ENCODE measurements at regions of chr17 and their contacts with region 1.

Region 1: DNA sequence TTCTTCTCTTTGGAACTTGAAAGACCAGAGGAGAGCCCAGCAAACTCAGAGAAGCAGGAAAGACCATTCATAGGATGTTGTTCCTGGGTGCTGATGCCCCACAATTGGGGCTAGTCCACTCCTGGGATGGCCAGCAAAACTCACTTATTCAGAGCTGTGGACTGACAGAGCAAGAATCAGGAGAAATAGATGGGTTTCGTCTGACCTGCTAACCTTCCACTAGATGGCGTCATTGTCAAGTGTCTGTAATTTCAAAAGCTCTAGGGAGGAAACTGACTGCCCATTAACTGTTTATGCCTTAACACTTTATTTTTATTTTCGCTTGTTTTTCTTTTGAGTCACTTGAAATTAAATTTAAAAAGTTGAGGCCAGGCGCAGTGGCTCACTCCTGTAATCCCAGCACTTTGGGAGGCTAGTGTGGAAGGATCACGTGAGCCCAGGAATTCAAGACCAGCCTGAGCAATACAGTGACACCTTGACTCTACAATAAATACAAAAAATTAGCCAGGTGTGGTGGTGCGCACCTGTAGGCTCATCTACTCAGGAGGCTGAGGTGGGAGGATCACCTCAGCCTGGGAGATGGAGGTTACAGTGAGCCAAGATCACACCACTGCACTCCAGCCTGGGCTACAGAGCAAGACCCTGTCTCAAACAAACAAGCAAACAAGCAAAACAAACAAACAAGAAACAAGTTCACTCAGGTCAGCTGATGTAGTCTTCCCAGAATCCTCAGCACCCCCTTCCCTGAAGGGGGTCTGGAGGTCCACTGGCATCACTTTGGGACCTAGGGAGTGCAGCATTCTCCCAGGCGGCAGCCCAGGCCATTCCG is 28.6 kb upstream of the MILR1 start:
- DNase-seq: peak; percentile 66
- CTCF ChIP-seq: peak; percentile 80

Region 2: GRCh38 chr17:64320613-64321553 is 99.5 kb before region 1 on chr17:
- CTCF ChIA-PET with region 1: interaction called, 125 read pairs
- POLR2A ChIA-PET with region 1: no interaction called
- DNase-seq: peak; percentile 83
- CTCF ChIP-seq: peak; percentile 72

Region 3: GRCh38 chr17:64382061-64382583 is 38.2 kb before region 1 on chr17:
- CTCF ChIA-PET with region 1: interaction called, 14 read pairs
- POLR2A ChIA-PET with region 1: no interaction called
- DNase-seq: no peak
- CTCF ChIP-seq: no peak

Region 4: GRCh38 chr17:64448665-64449512 is 28.5 kb after region 1 on chr17 and contains the start of gene MILR1:
- CTCF ChIA-PET with region 1: interaction called, 29 read pairs
- POLR2A ChIA-PET with region 1: no interaction called
- DNase-seq: peak; percentile 49
- CTCF ChIP-seq: no peak

Region 5: GRCh38 chr17:64479650-64480049 is 59.3 kb after region 1 on chr17:
- CTCF ChIA-PET with region 1: interaction called, 39 read pairs
- POLR2A ChIA-PET with region 1: interaction called, 3 read pairs
- DNase-seq: no peak
- CTCF ChIP-seq: no peak

Region 6: GRCh38 chr17:64648234-64648633 is 227.9 kb after region 1 on chr17:
- CTCF ChIA-PET with region 1: interaction called, 52 read pairs
- POLR2A ChIA-PET with region 1: no interaction called
- DNase-seq: no peak
- CTCF ChIP-seq: no peak

Measured in GM10248 (cell line).